Heart right ventricle (tissue), 16 donors: ENCODE measurements at regions of chr19 and their contacts with region 1.

Region 1: GRCh38 chr19:4723367-4724187 is at the start of gene DPP9:
- DNase-seq: peak; percentile 96 to 97
- ATAC-seq: peak; percentile 95 to 97 (median 96)
- H3K4me3 ChIP-seq: peak within 1 kb of the TSS; percentile 76 to 97 (median 91)
- H3K27ac ChIP-seq: peak within 1 kb of the TSS; percentile 89 to 97 (median 94)
- H3K4me1 ChIP-seq: peaks cover 10 to 34% (median 24%) of the 10 kb centered on the region in 9 donors
- H3K27me3 ChIP-seq: no peaks in the 10 kb centered on the region
- CTCF ChIP-seq: peak in 6 of 9 donors; percentile 33 to 54 (median 46)
- total RNA-seq, gene DPP9: 34.2 to 52.2 (median 45.0) TPM

Region 2: DNA sequence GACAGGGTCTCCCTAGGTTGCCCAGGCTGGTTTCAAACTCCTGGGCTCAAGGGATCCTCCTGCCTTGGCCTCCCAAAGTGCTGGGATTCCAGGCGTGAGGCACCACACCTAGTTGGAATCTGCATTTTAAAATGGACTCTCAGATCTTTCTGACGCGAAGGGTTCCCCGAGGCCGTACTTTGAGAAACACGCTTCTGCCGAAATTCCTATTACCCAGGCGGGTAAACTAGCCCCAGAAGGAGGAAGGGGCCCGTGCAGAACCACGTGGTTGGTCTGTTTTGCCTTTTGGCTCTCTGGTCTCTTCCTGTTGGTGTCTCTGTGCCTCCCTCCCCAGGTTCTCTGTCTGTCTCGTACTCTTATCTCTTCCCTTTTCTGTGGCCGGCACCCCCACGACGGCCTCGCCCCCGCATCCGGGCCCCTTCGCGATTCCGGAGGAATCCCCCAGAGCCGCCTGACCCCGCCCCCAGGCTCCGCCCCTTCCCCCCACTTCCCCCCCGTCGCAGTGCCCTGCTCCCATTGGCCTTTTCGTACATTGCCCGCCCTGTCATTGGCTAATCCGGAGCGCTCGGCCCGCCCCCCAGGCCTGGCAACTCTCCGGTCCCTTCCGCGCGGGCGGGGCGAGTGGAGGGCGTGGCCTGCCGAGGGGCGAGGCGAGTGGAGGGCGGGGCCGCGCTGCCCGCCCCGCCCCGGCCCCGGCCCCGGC is 84.6 kb before region 1 on chr19 and contains the start of gene TNFAIP8L1:
- intact Hi-C with region 1: no loop called
- DNase-seq: peak; percentile 97 to 98
- ATAC-seq: peak; percentile 92 to 96 (median 94)
- H3K4me3 ChIP-seq: peak within 1 kb of the TSS; percentile 49 to 89 (median 81)
- H3K27ac ChIP-seq: peak within 1 kb of the TSS; percentile 18 to 92 (median 86)
- H3K4me1 ChIP-seq: peaks cover 7 to 74% (median 58%) of the 10 kb centered on the region in 9 donors
- H3K27me3 ChIP-seq: peaks cover 0 to 5% (median 0%) of the 10 kb centered on the region in 7 donors
- CTCF ChIP-seq: no peak
- total RNA-seq, gene TNFAIP8L1: 2.5 to 13.4 (median 6.1) TPM

Region 3: DNA sequence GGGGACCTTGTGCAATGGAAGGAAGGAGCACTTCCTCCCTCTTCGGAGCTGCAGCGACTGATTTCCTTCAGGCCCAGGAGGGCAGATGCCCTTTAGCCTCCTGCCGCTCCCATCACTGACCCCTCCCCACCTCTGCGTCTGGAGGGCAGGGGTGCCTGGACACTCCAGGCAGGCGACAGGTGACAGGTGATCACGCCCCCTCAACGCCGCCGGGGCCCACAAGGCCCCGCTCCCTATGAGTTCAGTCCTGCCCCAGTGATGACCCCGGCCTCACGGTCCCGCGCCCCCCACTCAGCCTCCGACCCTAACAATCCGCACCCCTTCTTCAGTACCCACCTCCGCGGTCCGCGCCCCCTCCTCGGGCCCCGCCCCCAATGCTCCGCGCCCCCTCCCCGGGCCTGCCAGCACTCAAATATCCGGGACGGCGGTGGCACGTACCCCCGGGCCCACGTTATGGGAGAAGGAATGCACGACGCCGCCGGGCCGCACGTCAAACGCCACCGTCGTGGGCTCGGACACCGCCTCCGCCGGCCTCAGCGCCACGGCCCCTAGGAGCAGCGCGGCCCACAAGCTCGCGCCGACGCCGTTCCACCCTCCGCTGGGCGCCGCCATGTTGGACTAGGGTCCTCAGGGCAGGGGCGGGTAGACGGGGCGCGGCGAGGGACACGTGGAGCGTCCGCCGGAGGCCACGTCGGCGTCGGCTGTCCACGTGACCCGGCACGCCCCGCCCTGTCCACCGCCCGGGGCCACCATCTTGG is 53.7 kb before region 1 on chr19 and contains the start of gene MYDGF:
- intact Hi-C with region 1: loop called in 4 of 10 experiments (anchors 2 to 5 kb)
- DNase-seq: peak; percentile 93 to 95
- ATAC-seq: peak; percentile 98 to 99 (median 99)
- H3K4me3 ChIP-seq: peak within 1 kb of the TSS; percentile 72 to 94 (median 85)
- H3K27ac ChIP-seq: peak within 1 kb of the TSS; percentile 2 to 89 (median 79)
- H3K4me1 ChIP-seq: peaks cover 7 to 39% (median 20%) of the 10 kb centered on the region in 9 donors
- H3K27me3 ChIP-seq: no peaks in the 10 kb centered on the region
- CTCF ChIP-seq: no peak
- total RNA-seq, gene MYDGF: 14.2 to 48.5 (median 21.1) TPM

Region 4: GRCh38 chr19:4676955-4677731 is 46.4 kb before region 1 on chr19:
- intact Hi-C with region 1: loop called in 3 of 10 experiments (anchors 5 kb)
- DNase-seq: peak in 1 of 2 donors; percentile 43
- ATAC-seq: peak; percentile 19 to 68 (median 58)
- H3K4me3 ChIP-seq: no peak overlapping the region
- H3K27ac ChIP-seq: peak overlapping the region in 9 of 10 donors; percentile 14 to 64 (median 47)
- H3K4me1 ChIP-seq: peaks cover 0 to 12% (median 3%) of the 10 kb centered on the region in 9 donors
- H3K27me3 ChIP-seq: no peaks in the 10 kb centered on the region
- CTCF ChIP-seq: peak; percentile 35 to 66 (median 59)